CD14-positive monocyte (primary cell): ENCODE measurements at regions of chr11 and their contacts with region 1.

Region 1: GRCh38 chr11:57249384-57250319 is 12.6 kb upstream of the APLNR start:
- DNase-seq: peak; percentile 15 to 44 (median 33)
- H3K4me3 ChIP-seq: no peak overlapping the region
- H3K4me3 Mint-ChIP-seq: no peak overlapping the region
- H3K27ac ChIP-seq: no peak overlapping the region
- H3K27ac Mint-ChIP-seq: no peak overlapping the region
- H3K4me1 ChIP-seq: no peaks in the 10 kb centered on the region
- H3K4me1 Mint-ChIP-seq: peaks cover 3% of the 10 kb centered on the region
- H3K27me3 ChIP-seq: peaks cover 3 to 14% of the 10 kb centered on the region in 2 donors
- H3K27me3 Mint-ChIP-seq: peaks cover 8 to 17% (median 15%) of the 10 kb centered on the region in 3 donors
- CTCF ChIP-seq: peak; percentile 94

Region 2: DNA sequence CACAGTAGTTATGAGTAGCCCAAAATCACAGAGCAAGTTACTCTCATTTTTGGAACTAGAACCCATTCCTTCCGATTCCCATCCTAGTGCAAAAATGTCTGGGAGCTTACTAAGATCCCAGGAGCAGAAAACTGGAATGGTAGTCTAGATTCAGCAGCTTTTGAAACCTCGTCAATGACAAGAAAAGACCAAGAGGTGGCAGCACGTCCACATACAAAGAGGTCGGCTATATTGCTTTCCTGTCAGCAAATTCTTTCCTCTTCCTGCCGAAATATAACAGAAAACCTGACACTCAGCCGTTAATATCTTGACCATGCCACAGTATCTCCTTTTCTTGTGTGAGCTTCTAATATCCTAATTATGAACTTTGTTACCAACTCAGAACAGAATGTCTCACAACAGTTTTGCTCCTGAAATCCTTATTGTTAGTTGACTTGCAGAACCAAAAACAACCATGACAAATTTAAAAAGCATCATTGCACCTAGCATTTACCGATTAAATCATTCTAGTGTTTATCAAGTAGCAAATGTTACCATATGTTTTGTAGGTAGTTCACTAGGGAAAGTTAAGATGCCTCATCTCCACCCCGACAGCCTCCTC is 408.3 kb before region 1 on chr11:
- intact Hi-C with region 1: loop called (anchors 5 kb)
- DNase-seq: peak in 2 of 3 donors; percentile 4 to 5
- H3K4me3 ChIP-seq: no peak overlapping the region
- H3K4me3 Mint-ChIP-seq: no peak overlapping the region
- H3K27ac ChIP-seq: no peak overlapping the region
- H3K27ac Mint-ChIP-seq: no peak overlapping the region
- H3K4me1 ChIP-seq: no peaks in the 10 kb centered on the region
- H3K4me1 Mint-ChIP-seq: no peaks in the 10 kb centered on the region
- H3K27me3 ChIP-seq: no peaks in the 10 kb centered on the region
- H3K27me3 Mint-ChIP-seq: peaks cover 2 to 4% (median 3%) of the 10 kb centered on the region in 3 donors
- CTCF ChIP-seq: peak; percentile 44

Region 3: DNA sequence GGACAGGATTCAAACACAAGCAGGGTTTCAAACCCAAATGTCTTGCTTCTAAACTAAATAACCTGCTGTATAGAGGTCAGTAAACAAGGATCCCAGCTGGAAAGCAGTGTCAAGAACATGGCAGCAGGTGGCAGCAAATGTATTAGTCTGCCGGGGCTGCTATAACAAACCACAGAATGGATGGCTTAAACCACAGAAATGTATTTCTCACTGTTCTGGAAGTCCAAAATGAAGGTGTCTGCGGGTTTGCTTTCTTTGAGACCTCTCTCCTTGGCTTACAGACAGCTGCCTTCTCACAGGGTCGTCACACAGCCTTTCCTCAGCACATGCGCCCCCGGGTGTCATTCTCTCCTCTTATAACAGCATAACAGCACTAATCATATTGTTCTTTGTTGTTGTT is 133.0 kb before region 1 on chr11:
- intact Hi-C with region 1: loop called (anchors 2 to 5 kb)
- DNase-seq: peak in 2 of 3 donors; percentile 2 to 14
- H3K4me3 ChIP-seq: no peak overlapping the region
- H3K4me3 Mint-ChIP-seq: no peak overlapping the region
- H3K27ac ChIP-seq: no peak overlapping the region
- H3K27ac Mint-ChIP-seq: no peak overlapping the region
- H3K4me1 ChIP-seq: no peaks in the 10 kb centered on the region
- H3K4me1 Mint-ChIP-seq: no peaks in the 10 kb centered on the region
- H3K27me3 ChIP-seq: peaks cover 2 to 3% of the 10 kb centered on the region in 2 donors
- H3K27me3 Mint-ChIP-seq: peaks cover 0 to 7% (median 6%) of the 10 kb centered on the region in 3 donors
- CTCF ChIP-seq: peak; percentile 39